T-cell (primary cell): ENCODE measurements at regions of chr9 and their contacts with region 1.

Region 1: DNA sequence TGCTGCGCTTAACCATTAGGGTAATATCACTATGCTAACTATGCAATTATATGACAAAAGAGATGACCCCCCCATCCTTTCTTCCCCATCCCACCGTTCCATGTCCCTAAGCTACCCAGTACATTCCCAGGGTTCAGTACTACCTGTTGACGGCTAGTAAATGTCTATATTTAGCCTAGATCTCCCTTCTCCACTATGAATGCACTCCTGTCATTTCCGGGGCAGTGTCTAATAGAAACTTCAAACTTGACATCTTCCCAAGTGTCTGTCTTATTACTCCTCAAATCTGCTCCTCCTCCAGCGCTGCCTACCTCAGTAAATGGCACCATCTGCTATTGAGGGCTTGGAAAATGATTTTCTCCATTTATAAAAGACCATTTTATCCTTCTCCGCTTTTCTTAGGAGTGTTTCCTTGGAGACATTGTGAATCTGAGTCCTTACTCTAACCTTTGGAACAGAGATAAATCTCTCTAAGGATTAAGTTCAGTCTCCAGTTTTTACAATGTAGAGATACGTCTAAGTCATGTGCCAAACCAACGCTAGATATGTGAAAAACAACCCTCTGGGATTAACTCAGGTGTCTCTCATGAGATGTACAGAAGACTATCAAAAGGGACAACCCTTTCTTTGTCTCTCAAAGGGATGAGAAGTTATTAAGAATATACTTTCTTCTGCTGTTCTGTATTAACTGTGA is 114.9 kb downstream of the BNC2 start:
- DNase-seq: no peak
- ATAC-seq: no peak
- H3K4me3 ChIP-seq: no peak overlapping the region
- H3K4me3 Mint-ChIP-seq: no peak overlapping the region
- H3K27ac ChIP-seq: no peak overlapping the region
- H3K27ac Mint-ChIP-seq: no peak overlapping the region
- H3K4me1 ChIP-seq: no peaks in the 10 kb centered on the region
- H3K4me1 Mint-ChIP-seq: no peaks in the 10 kb centered on the region
- H3K27me3 ChIP-seq: no peaks in the 10 kb centered on the region
- H3K27me3 Mint-ChIP-seq: no peaks in the 10 kb centered on the region

Region 2: GRCh38 chr9:16768816-16769215 is 13.2 kb after region 1 on chr9:
- CTCF ChIA-PET with region 1: no interaction called
- POLR2A ChIA-PET with region 1: interaction called in 1 of 2 experiments, 11 read pairs
- DNase-seq: no peak
- ATAC-seq: no peak
- H3K4me3 ChIP-seq: no peak overlapping the region
- H3K4me3 Mint-ChIP-seq: no peak overlapping the region
- H3K27ac ChIP-seq: no peak overlapping the region
- H3K27ac Mint-ChIP-seq: no peak overlapping the region
- H3K4me1 ChIP-seq: no peaks in the 10 kb centered on the region
- H3K4me1 Mint-ChIP-seq: no peaks in the 10 kb centered on the region
- H3K27me3 ChIP-seq: no peaks in the 10 kb centered on the region
- H3K27me3 Mint-ChIP-seq: no peaks in the 10 kb centered on the region